B cell (primary cell): ENCODE measurements at regions of chr1 and their contacts with region 1.

Region 1: DNA sequence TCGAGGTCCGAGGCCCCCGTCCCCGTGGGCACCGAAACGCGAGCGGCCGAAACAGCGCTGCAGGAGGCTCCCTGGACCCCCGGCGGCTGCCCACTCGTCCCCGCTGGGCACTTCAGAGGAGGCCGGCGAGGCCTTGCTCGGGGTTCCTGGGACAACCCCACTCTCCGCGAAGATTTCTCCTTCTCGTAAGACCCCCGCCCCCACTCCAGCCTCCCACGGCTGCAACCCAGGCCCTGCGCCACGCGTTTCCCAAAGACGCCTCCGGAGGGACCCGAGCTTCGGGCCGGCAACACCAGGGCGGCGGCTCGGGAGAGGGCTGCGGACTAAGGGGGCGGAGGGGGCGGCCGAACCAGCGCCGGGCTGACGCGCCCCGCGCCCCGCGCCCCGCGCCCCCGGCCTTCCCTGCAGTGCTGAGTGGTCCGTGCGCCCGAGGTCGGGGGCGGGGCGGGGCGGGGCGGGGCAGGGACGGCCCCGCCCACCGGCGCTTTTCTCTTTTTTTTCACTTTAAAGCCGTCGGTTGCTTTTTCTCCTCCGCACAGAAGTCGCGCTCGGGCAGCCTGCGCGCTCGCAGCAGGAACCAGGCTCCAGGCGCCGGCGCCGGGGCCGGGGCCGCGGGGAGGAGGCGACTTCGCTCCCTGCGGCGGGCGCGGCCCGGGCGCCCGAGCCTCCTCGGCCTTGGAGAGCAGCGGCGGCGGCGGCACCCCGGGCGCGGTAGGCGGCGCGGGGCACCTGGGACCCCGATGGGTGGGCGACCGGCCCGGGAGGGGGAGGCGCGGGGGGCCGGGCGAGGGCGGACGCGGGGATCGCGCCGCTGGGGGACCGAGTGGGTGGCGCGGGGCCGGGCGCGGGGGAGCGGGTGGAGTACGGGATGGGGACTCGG is at the start of gene SPSB1:
- DNase-seq: peak; percentile 86
- ATAC-seq: peak; percentile 68
- H3K4me3 ChIP-seq: peak within 1 kb of the TSS; percentile 41 to 70 (median 59)
- H3K4me3 Mint-ChIP-seq: peak within 1 kb of the TSS; percentile 64
- H3K27ac ChIP-seq: peak within 1 kb of the TSS in 1 of 2 donors; percentile 47
- H3K27ac Mint-ChIP-seq: peak within 1 kb of the TSS; percentile 72
- H3K4me1 ChIP-seq: peaks cover 6 to 23% of the 10 kb centered on the region in 2 donors
- H3K4me1 Mint-ChIP-seq: peaks cover 7% of the 10 kb centered on the region
- H3K27me3 ChIP-seq: no peaks in the 10 kb centered on the region
- H3K27me3 Mint-ChIP-seq: no peaks in the 10 kb centered on the region
- CTCF ChIP-seq: no peak
- total RNA-seq, gene SPSB1: 8.9 and 9.4 TPM in 2 replicates

Region 2: DNA sequence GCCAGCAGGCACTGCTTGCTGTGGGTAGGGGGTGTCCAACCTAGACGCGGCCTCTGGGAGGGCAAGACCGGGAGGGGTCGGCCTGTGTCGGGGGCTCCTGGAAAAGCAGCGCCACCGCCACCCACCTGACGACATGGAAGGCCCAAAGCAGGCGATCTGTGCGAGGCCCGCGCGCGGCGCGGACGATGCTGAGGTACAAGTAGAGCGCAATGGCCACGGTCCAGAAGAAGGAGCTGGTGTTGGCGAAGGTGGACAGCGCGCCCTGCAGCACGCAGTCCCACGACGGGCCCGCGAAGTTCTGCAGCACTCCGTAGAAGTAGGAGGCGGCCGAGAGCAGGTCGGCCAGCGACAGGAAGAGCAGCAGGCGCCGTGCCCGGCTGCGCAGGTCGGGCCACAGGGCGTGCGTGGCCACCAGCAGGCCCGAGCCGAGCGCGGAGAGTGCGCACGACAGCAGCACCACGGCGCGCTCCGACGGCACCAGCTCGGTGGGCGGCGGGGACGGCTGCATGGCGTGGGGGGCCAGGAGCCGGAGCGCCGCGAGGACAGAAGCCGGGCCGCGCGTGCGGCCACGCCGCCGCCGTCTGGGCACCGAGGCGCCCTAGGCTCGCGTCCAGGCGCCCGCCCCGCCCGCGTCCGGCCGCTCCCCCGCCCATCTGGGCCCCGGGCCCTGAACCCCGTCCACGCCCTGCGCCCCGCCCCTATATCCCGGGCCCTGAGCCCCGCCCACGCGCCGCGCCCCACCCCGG is 163.9 kb before region 1 on chr1 and contains the start of gene GPR157:
- CTCF ChIA-PET with region 1: interaction called, 3 read pairs
- POLR2A ChIA-PET with region 1: no interaction called
- intact Hi-C with region 1: loop called (anchors 5 kb)
- DNase-seq: peak; percentile 90
- ATAC-seq: peak; percentile 88
- H3K4me3 ChIP-seq: peak within 1 kb of the TSS; percentile 44 to 79 (median 61)
- H3K4me3 Mint-ChIP-seq: peak within 1 kb of the TSS; percentile 94
- H3K27ac ChIP-seq: peak within 1 kb of the TSS; percentile 38 to 48
- H3K27ac Mint-ChIP-seq: peak within 1 kb of the TSS; percentile 78
- H3K4me1 ChIP-seq: peaks cover 17 to 29% of the 10 kb centered on the region in 2 donors
- H3K4me1 Mint-ChIP-seq: peaks cover 44% of the 10 kb centered on the region
- H3K27me3 ChIP-seq: no peaks in the 10 kb centered on the region
- H3K27me3 Mint-ChIP-seq: no peaks in the 10 kb centered on the region
- CTCF ChIP-seq: no peak
- total RNA-seq, gene GPR157: 19.9 and 21.2 TPM in 2 replicates

Region 3: DNA sequence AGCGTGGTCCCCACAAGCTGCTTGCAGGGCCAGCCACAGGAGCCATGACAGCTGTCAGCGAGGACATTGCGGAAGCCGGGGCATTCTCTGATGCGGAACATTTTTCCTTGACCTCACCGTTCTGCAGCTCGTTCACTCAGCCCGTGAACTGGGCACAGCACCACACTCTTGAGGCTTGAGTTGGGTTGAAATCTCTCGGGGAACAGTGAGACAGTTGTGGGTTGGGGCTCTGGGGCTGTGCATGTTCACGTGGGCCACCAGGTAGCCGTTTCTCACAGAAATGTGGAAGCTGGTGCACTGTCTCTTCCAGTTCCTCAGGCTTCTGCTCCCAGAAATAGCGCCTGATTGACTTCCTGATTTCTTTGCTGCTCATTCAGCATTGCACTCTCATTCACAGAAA is 69.9 kb after region 1 on chr1:
- CTCF ChIA-PET with region 1: interaction called, 4 read pairs
- POLR2A ChIA-PET with region 1: no interaction called
- intact Hi-C with region 1: loop called (anchors 2 kb)
- DNase-seq: peak; percentile 58
- ATAC-seq: peak; percentile 56
- H3K4me3 ChIP-seq: peak overlapping the region in 2 of 5 experiments; percentile 6 to 23
- H3K4me3 Mint-ChIP-seq: peak overlapping the region; percentile 80
- H3K27ac ChIP-seq: no peak overlapping the region
- H3K27ac Mint-ChIP-seq: peak overlapping the region; percentile 59
- H3K4me1 ChIP-seq: peaks cover 21 to 26% of the 10 kb centered on the region in 2 donors
- H3K4me1 Mint-ChIP-seq: peaks cover 20% of the 10 kb centered on the region
- H3K27me3 ChIP-seq: no peaks in the 10 kb centered on the region
- H3K27me3 Mint-ChIP-seq: no peaks in the 10 kb centered on the region
- CTCF ChIP-seq: no peak

Region 4: DNA sequence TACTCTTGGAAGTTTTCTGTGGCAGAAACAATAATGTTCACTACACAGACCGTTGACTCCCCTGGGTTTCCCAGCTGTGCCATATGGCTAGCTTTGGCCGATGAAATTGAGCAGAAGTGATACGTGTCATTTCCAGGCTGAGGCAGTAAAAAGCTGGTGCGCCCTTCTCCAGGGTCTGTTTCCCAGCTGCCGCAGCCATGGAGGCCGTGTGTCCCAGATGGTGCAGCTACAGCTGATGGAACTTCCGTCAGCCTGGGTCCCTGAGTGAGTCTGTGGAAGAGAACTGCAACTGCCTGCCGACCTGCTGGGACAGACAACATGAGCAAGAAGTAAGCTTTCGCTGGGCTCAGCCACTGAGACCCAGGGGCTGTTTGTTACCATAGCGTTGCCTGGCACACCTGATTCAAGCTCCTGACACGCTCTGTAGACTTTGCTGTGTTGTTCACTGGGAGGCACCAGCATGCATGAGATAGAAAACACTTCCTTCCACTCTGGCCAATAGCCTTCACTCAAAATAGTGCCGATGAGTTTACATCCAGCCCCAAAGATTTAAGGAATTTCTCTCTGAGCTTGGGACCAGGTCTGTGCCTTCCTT is 130.4 kb after region 1 on chr1:
- CTCF ChIA-PET with region 1: interaction called, 25 read pairs
- POLR2A ChIA-PET with region 1: interaction called, 7 read pairs
- intact Hi-C with region 1: loop called (anchors 1 kb)
- DNase-seq: no peak
- ATAC-seq: no peak
- H3K4me3 ChIP-seq: no peak overlapping the region
- H3K4me3 Mint-ChIP-seq: no peak overlapping the region
- H3K27ac ChIP-seq: no peak overlapping the region
- H3K27ac Mint-ChIP-seq: peak overlapping the region; percentile 56
- H3K4me1 ChIP-seq: peaks cover 80 to 97% of the 10 kb centered on the region in 2 donors
- H3K4me1 Mint-ChIP-seq: peaks cover 77% of the 10 kb centered on the region
- H3K27me3 ChIP-seq: no peaks in the 10 kb centered on the region
- H3K27me3 Mint-ChIP-seq: no peaks in the 10 kb centered on the region
- CTCF ChIP-seq: no peak

Region 5: GRCh38 chr1:9443913-9444445 is 151.4 kb after region 1 on chr1:
- CTCF ChIA-PET with region 1: interaction called, 15 read pairs
- POLR2A ChIA-PET with region 1: no interaction called
- intact Hi-C with region 1: no loop called
- DNase-seq: no peak
- ATAC-seq: no peak
- H3K4me3 ChIP-seq: no peak overlapping the region
- H3K4me3 Mint-ChIP-seq: no peak overlapping the region
- H3K27ac ChIP-seq: no peak overlapping the region
- H3K27ac Mint-ChIP-seq: no peak overlapping the region
- H3K4me1 ChIP-seq: peaks cover 3 to 6% of the 10 kb centered on the region in 2 donors
- H3K4me1 Mint-ChIP-seq: peaks cover 10% of the 10 kb centered on the region
- H3K27me3 ChIP-seq: peaks cover 0 to 8% (median 0%) of the 10 kb centered on the region in 4 experiments
- H3K27me3 Mint-ChIP-seq: peaks cover 12% of the 10 kb centered on the region
- CTCF ChIP-seq: no peak

Region 6: GRCh38 chr1:9482816-9483572 is 190.4 kb after region 1 on chr1:
- CTCF ChIA-PET with region 1: interaction called, 239 read pairs
- POLR2A ChIA-PET with region 1: no interaction called
- intact Hi-C with region 1: no loop called
- DNase-seq: no peak
- ATAC-seq: no peak
- H3K4me3 ChIP-seq: no peak overlapping the region
- H3K4me3 Mint-ChIP-seq: no peak overlapping the region
- H3K27ac ChIP-seq: no peak overlapping the region
- H3K27ac Mint-ChIP-seq: no peak overlapping the region
- H3K4me1 ChIP-seq: no peaks in the 10 kb centered on the region
- H3K4me1 Mint-ChIP-seq: no peaks in the 10 kb centered on the region
- H3K27me3 ChIP-seq: peaks cover 0 to 9% (median 0%) of the 10 kb centered on the region in 4 experiments
- H3K27me3 Mint-ChIP-seq: peaks cover 15% of the 10 kb centered on the region
- CTCF ChIP-seq: no peak

Region 7: DNA sequence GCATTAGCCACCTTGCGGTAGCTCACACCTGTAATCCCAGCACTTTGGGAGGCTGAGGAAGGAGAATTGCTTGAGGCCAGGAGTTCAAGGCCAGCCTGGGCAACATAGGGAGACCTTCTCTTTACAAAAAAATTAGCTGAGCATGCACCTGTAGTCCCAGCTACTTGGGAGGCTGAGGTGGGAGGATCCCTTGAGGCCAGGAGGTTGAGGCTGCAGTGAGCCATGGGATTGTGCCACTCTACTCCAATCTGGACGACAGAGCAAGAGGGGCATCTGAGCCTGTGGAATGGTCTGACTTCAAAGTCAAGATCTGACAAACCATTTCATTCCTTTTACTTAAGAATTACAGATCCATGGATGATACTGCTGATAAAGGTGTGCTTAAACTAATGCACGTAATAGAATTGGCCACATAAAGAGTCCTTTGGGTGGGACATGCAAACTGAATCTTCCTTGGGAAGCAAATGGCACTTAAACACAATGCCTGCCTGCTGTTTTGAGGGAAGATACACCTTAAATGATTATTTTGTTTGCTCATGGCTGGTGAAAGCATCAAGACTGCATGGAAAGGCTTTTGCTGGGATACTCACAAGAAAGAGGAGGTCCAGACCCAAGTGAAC is 293.7 kb after region 1 on chr1:
- CTCF ChIA-PET with region 1: no interaction called
- POLR2A ChIA-PET with region 1: no interaction called
- intact Hi-C with region 1: no loop called
- DNase-seq: no peak
- ATAC-seq: no peak
- H3K4me3 ChIP-seq: no peak overlapping the region
- H3K4me3 Mint-ChIP-seq: no peak overlapping the region
- H3K27ac ChIP-seq: no peak overlapping the region
- H3K27ac Mint-ChIP-seq: no peak overlapping the region
- H3K4me1 ChIP-seq: peaks cover 19 to 25% of the 10 kb centered on the region in 2 donors
- H3K4me1 Mint-ChIP-seq: peaks cover 20% of the 10 kb centered on the region
- H3K27me3 ChIP-seq: no peaks in the 10 kb centered on the region
- H3K27me3 Mint-ChIP-seq: no peaks in the 10 kb centered on the region
- CTCF ChIP-seq: no peak